Posterior cingulate gyrus (tissue), 11 donors: ENCODE measurements at regions of chr10 and their contacts with region 1.

Region 1: GRCh38 chr10:104642658-104643302 is 1.7 kb downstream of the SORCS3 start:
- DNase-seq: peak; percentile 74 to 96 (median 86)

Region 2: GRCh38 chr10:104777086-104777799 is 134.5 kb after region 1 on chr10:
- intact Hi-C with region 1: loop called (anchors 5 kb)
- DNase-seq: peak in 3 of 10 donors; percentile 14 to 77 (median 21)

Region 3: GRCh38 chr10:104925232-104925851 is 282.6 kb after region 1 on chr10:
- intact Hi-C with region 1: loop called (anchors 5 kb)
- DNase-seq: peak in 4 of 10 donors; percentile 22 to 44 (median 31)